Right cardiac atrium (tissue), 5 donors: ENCODE measurements at regions of chr12 and their contacts with region 1.

Region 1: GRCh38 chr12:51424662-51425438 is at the start of gene SLC4A8:
- DNase-seq: peak; percentile 89 to 94 (median 92)
- ATAC-seq: peak; percentile 96
- H3K4me3 ChIP-seq: peak within 1 kb of the TSS; percentile 27
- H3K27ac ChIP-seq: no peak within 1 kb of the TSS
- H3K4me1 ChIP-seq: no peaks in the 10 kb centered on the region
- H3K27me3 ChIP-seq: no peaks in the 10 kb centered on the region
- total RNA-seq, gene SLC4A8: 0.23 to 0.50 (median 0.24) TPM

Region 2: GRCh38 chr12:51047655-51048540 is 377.0 kb before region 1 on chr12 and contains the start of gene LETMD1:
- intact Hi-C with region 1: no loop called
- DNase-seq: peak; percentile 94 to 96 (median 95)
- ATAC-seq: peak; percentile 100
- H3K4me3 ChIP-seq: peak within 1 kb of the TSS; percentile 86
- H3K27ac ChIP-seq: peak within 1 kb of the TSS; percentile 98
- H3K4me1 ChIP-seq: no peaks in the 10 kb centered on the region
- H3K27me3 ChIP-seq: no peaks in the 10 kb centered on the region
- total RNA-seq, gene LETMD1: 29.8 to 33.9 (median 32.0) TPM

Region 3: GRCh38 chr12:51270067-51270970 is 154.5 kb before region 1 on chr12 and contains the start of gene SMAGP:
- intact Hi-C with region 1: no loop called
- DNase-seq: peak; percentile 61 to 81 (median 77)
- ATAC-seq: peak; percentile 80 to 89
- H3K4me3 ChIP-seq: peak within 1 kb of the TSS; percentile 60
- H3K27ac ChIP-seq: peak within 1 kb of the TSS; percentile 39
- H3K4me1 ChIP-seq: no peaks in the 10 kb centered on the region
- H3K27me3 ChIP-seq: no peaks in the 10 kb centered on the region
- total RNA-seq, gene SMAGP: 1.4 to 6.2 (median 3.1) TPM

Region 4: GRCh38 chr12:51531978-51532497 is 107.2 kb after region 1 on chr12:
- intact Hi-C with region 1: loop called in 3 of 4 experiments (anchors 5 to 10 kb)
- DNase-seq: peak; percentile 60 to 85 (median 78)
- ATAC-seq: peak; percentile 81 to 86
- H3K4me3 ChIP-seq: no peak overlapping the region
- H3K27ac ChIP-seq: no peak overlapping the region
- H3K4me1 ChIP-seq: no peaks in the 10 kb centered on the region
- H3K27me3 ChIP-seq: no peaks in the 10 kb centered on the region

Region 5: DNA sequence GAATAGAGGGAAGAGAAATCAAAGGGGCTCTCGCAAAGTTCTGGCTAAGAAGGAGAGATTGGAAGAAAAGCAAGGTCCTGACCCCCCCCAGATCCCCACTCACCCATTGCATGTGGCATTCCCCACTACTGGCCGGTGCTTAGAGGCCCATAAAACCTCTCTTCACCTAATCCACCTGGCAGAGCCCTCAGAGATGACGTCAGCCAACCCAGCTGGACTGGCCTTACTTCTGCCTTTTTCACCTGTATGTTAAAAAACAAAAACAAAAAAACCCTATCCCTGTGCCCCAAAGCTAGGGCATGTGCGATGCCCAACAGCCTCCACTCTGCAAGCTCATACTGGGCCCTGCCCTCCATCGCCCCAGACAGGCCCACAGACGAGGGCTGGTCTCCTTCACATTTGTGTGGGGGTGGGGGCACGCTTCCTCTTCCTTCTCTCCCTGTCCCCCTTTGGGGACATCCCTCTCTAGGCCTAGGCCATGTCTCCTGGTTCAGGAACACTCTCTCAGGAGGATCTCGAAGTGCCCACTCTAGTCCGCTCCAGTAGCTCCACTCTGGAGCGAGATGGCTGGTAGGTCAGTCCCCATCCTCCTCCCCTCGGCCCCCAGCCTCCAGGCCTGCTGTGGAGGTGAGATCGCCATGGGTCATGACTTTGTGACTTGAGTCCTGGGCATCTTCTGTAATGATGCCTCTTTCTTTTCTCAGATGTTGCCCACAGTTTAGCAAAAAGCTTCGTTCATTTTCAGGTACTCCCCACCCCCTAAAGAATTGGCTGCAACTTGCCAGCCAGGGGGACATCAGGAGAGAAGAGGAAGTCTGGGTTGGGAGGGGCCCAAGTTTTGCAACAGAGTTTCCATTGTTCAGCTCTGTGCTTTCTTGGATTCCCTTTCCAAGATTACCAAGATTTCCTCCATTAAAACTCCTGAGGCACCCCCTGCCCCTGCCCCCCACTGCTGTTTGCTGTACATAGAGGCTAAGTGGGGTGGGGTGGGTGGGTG is 386.7 kb after region 1 on chr12:
- intact Hi-C with region 1: no loop called
- DNase-seq: no peak
- ATAC-seq: no peak
- H3K4me3 ChIP-seq: no peak overlapping the region
- H3K27ac ChIP-seq: no peak overlapping the region
- H3K4me1 ChIP-seq: no peaks in the 10 kb centered on the region
- H3K27me3 ChIP-seq: no peaks in the 10 kb centered on the region